SK-N-SH (cell line): ENCODE measurements at regions of chr1 and their contacts with region 1.

Region 1: GRCh38 chr1:205719762-205720161 is 30.2 kb downstream of the NUCKS1 start:
- DNase-seq: no peak
- H3K4me3 ChIP-seq: no peak overlapping the region
- H3K27ac ChIP-seq: no peak overlapping the region
- H3K4me1 ChIP-seq: no peaks in the 10 kb centered on the region
- H3K27me3 ChIP-seq: no peaks in the 10 kb centered on the region
- CTCF ChIP-seq: no peak
- EP300 ChIP-seq: no peak
- RAD21 ChIP-seq: no peak

Region 2: GRCh38 chr1:205563867-205564441 is 155.8 kb before region 1 on chr1:
- CTCF ChIA-PET with region 1: no interaction called
- POLR2A ChIA-PET with region 1: no interaction called
- DNase-seq: no peak
- H3K4me3 ChIP-seq: no peak overlapping the region
- H3K27ac ChIP-seq: no peak overlapping the region
- H3K4me1 ChIP-seq: peaks cover 0 to under 1% of the 10 kb centered on the region in 2 experiments; a peak in 1 of 4 replicates
- H3K27me3 ChIP-seq: peaks cover 31% of the 10 kb centered on the region
- CTCF ChIP-seq: no peak
- EP300 ChIP-seq: no peak
- RAD21 ChIP-seq: no peak

Region 3: GRCh38 chr1:205729945-205730610 is 10.3 kb after region 1 on chr1:
- CTCF ChIA-PET with region 1: interaction called, 12 read pairs
- POLR2A ChIA-PET with region 1: no interaction called
- DNase-seq: no peak
- H3K4me3 ChIP-seq: no peak overlapping the region
- H3K27ac ChIP-seq: no peak overlapping the region
- H3K4me1 ChIP-seq: no peaks in the 10 kb centered on the region
- H3K27me3 ChIP-seq: no peaks in the 10 kb centered on the region
- CTCF ChIP-seq: no peak
- EP300 ChIP-seq: no peak
- RAD21 ChIP-seq: no peak